ENCODE measurements at regions of chr19 and their contacts with region 1.

Region 1: GRCh38 chr19:1189419-1189818 is 15.4 kb upstream of the SBNO2 start:
- DNase-seq: peak in 13 of 14 experiments; percentile 31 to 79 (median 50)
- ATAC-seq: peak; percentile 46
- H3K4me3 ChIP-seq: no peak overlapping the region
- H3K4me3 Mint-ChIP-seq: peak overlapping the region; percentile 64
- H3K27ac ChIP-seq: no peak overlapping the region
- H3K27ac Mint-ChIP-seq: peak overlapping the region; percentile 72
- H3K4me1 ChIP-seq: peaks cover 50% of the 10 kb centered on the region
- H3K4me1 Mint-ChIP-seq: peaks cover 22% of the 10 kb centered on the region
- H3K27me3 ChIP-seq: no peaks in the 10 kb centered on the region
- H3K27me3 Mint-ChIP-seq: no peaks in the 10 kb centered on the region
- CTCF ChIP-seq: no peak

Region 2: DNA sequence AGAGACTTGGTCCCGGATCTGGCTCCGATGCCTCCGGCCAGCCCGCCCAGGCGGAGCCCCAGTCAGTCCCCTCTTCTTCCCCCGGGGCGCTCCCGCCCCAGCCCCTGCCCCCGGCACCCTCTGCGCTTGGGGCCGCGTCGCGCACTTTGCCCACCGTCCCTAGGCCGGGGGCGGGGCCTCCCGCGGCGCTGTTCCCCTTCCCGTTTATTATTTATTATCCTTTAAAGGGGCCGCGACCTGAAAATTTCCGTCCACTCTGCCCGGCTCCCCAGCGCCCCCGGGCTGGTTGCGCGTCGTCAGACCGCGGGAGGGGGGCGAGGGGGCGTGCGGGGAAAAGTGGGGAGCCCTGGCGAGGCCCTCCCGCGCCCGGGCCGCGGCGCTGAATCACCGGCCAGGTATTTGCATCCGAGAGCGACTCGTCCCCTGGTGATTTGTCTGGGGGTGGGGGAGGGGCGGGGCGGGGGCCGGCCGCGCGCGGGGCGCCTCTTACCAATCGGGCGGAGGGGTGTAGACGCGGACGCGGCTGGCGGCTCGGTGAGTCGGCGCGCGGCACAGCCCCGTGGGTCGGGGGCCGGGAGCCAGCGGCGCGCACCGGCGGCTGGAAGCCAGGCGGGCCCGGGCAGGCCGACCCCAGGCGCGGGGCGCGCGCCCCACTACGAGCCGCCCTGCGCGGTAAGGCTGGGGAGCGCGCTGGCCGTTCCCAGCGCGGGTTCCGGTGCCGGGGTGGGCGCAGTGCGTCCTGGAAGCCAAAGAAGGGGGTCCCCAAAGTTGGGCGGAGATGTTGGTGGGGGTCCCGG is 263.7 kb before region 1 on chr19 and contains the start of gene ARID3A:
- CTCF ChIA-PET with region 1: no interaction called
- POLR2A ChIA-PET with region 1: no interaction called
- intact Hi-C with region 1: loop called (anchors 5 kb)
- DNase-seq: peak; percentile 55 to 87 (median 72)
- ATAC-seq: peak; percentile 66
- H3K4me3 ChIP-seq: peak within 1 kb of the TSS; percentile 83
- H3K4me3 Mint-ChIP-seq: peak within 1 kb of the TSS; percentile 86
- H3K27ac ChIP-seq: peak within 1 kb of the TSS in 1 of 2 donors; percentile 60
- H3K27ac Mint-ChIP-seq: peak within 1 kb of the TSS; percentile 36
- H3K4me1 ChIP-seq: peaks cover 44% of the 10 kb centered on the region
- H3K4me1 Mint-ChIP-seq: peaks cover 15% of the 10 kb centered on the region
- H3K27me3 ChIP-seq: no peaks in the 10 kb centered on the region
- H3K27me3 Mint-ChIP-seq: no peaks in the 10 kb centered on the region
- CTCF ChIP-seq: no peak
- total RNA-seq, gene ARID3A: 3.7 to 4.1 TPM

Region 3: DNA sequence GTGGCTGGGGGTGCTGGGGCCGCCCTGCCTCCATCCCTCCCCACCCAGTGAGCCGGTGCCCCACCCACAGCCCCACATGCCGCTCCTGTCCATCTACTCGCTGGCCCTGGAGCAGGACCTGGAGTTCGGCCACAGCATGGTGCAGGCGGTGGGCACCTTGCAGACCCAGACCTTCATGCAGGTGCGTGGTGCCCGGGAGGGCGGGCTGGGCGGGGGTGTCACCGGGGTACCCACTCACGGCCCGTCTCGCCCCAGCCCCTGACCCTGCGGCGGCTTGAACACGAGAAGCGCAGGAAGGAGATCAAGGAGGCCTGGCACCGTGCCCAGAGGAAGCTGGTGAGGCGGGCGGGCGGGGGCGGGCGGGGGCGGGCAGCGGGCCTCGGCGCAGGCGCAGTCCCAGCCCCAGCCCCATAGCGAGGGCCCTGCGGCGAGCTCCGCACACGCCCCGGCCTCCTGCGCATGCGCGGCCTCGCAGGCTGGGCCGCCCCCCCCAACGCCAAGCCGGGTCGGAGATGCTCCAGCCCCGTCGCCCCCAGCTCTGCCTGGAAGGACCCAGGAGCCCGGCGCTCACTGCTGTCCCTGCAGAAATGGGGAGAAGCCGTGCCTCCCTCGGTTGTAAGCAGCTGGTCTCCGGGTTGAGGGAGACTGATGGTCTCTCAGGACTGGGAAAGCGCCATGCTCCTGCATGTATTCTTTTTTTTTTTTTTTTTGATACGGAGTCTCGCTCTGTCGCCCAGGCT is 114.7 kb before region 1 on chr19:
- CTCF ChIA-PET with region 1: interaction called, 6 read pairs
- POLR2A ChIA-PET with region 1: interaction called, 17 read pairs
- intact Hi-C with region 1: loop called (anchors 5 kb)
- DNase-seq: peak; percentile 95 to 100 (median 97)
- ATAC-seq: peak; percentile 25
- H3K4me3 ChIP-seq: peak overlapping the region; percentile 48
- H3K4me3 Mint-ChIP-seq: peak overlapping the region; percentile 87
- H3K27ac ChIP-seq: peak overlapping the region; percentile 52 to 96
- H3K27ac Mint-ChIP-seq: peak overlapping the region; percentile 98
- H3K4me1 ChIP-seq: peaks cover 89% of the 10 kb centered on the region
- H3K4me1 Mint-ChIP-seq: peaks cover 53% of the 10 kb centered on the region
- H3K27me3 ChIP-seq: no peaks in the 10 kb centered on the region
- H3K27me3 Mint-ChIP-seq: peaks cover 4% of the 10 kb centered on the region
- CTCF ChIP-seq: no peak

Region 4: DNA sequence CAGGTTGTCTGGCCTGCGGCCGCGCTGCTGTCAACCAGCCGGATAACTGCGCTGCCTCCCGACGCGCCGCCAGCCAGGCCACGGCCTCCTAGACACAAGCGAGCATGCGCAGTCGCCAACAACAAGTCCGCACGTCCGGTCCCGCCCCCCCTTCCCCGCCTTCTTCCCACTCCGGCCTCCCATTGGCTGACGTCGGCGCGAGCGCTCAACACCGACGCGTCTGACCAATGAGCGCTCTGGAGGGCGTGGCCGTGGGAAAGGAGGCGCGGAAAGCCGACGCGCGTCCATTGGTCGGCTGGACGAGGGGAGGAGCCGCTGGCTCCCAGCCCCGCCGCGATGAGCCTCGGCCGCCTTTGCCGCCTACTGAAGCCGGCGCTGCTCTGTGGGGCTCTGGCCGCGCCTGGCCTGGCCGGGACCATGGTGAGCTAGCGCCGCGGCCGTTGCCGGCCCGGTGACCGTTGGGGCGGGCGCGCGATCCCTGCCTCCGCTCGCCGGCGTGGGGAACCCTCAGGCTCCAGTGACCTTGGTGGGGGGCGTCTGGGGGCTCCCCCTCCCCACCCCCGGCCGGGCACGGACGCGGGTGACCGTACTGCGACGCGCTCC is 85.6 kb before region 1 on chr19 and contains the start of gene GPX4:
- CTCF ChIA-PET with region 1: no interaction called
- POLR2A ChIA-PET with region 1: interaction called, 11 read pairs
- intact Hi-C with region 1: no loop called
- DNase-seq: peak; percentile 97 to 100 (median 98)
- ATAC-seq: peak; percentile 89
- H3K4me3 ChIP-seq: peak within 1 kb of the TSS; percentile 76
- H3K4me3 Mint-ChIP-seq: peak within 1 kb of the TSS; percentile 89
- H3K27ac ChIP-seq: peak within 1 kb of the TSS; percentile 69 to 96
- H3K27ac Mint-ChIP-seq: peak within 1 kb of the TSS; percentile 95
- H3K4me1 ChIP-seq: peaks cover 62% of the 10 kb centered on the region
- H3K4me1 Mint-ChIP-seq: peaks cover 31% of the 10 kb centered on the region
- H3K27me3 ChIP-seq: no peaks in the 10 kb centered on the region
- H3K27me3 Mint-ChIP-seq: no peaks in the 10 kb centered on the region
- CTCF ChIP-seq: no peak
- total RNA-seq, gene GPX4: 174 to 175 TPM

Region 5: DNA sequence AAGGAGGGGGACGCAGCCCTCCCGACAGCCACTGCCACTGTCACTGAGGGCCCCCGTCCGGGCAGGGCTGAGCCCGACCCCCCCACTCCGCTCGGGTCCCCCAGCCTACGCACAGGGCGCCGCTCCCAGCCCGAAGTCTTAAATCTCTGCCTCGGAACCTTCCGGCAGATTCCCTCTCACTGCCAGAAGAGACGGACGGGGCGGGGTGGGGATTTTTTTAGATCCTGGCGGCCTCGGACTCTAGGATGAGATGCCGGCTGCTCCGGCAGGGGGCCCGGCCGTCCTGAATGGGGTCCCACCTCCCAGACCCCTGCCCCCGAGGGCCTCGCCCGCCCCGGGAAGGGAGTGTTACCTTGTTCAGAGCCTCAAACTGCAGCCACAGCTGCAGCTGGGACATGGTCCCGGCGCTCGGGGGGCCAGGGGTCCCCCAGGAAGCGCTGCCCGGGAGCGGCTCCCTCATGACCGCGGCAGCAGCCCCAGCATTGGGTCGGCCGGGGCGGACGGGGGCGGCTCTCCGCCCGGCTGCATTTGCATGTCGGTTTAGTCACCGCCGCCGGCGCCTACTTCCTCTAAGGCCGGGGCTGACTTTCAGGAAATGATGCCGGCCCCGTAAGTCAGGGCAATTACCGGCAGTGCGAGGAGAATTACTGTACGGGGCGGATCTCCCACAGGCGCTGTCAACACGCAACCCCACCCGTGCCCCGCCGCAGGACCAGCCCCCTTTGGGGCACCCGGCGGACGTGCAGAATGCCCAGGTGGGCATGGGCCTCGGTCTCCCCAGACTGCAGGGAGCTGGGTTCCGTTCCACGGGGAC is 57.5 kb before region 1 on chr19:
- CTCF ChIA-PET with region 1: interaction called, 3 read pairs
- POLR2A ChIA-PET with region 1: interaction called, 16 read pairs
- intact Hi-C with region 1: loop called (anchors 5 kb)
- DNase-seq: peak; percentile 62 to 94 (median 88)
- ATAC-seq: peak; percentile 69
- H3K4me3 ChIP-seq: peak overlapping the region; percentile 95
- H3K4me3 Mint-ChIP-seq: peak overlapping the region; percentile 90
- H3K27ac ChIP-seq: peak overlapping the region; percentile 87 to 92
- H3K27ac Mint-ChIP-seq: peak overlapping the region; percentile 96
- H3K4me1 ChIP-seq: peaks cover 90% of the 10 kb centered on the region
- H3K4me1 Mint-ChIP-seq: peaks cover 36% of the 10 kb centered on the region
- H3K27me3 ChIP-seq: no peaks in the 10 kb centered on the region
- H3K27me3 Mint-ChIP-seq: no peaks in the 10 kb centered on the region
- CTCF ChIP-seq: no peak